ENCODE measurements at regions of chr4 and their contacts with region 1.

Region 1: GRCh38 chr4:109998867-109999584 is 86.3 kb downstream of the EGF start:
- DNase-seq: no peak
- H3K4me3 ChIP-seq: no peak overlapping the region
- H3K27ac ChIP-seq: no peak overlapping the region
- H3K4me1 ChIP-seq: peaks cover 5% of the 10 kb centered on the region
- H3K27me3 ChIP-seq: no peaks in the 10 kb centered on the region
- CTCF ChIP-seq: peak; percentile 27 to 56 (median 45)

Region 2: DNA sequence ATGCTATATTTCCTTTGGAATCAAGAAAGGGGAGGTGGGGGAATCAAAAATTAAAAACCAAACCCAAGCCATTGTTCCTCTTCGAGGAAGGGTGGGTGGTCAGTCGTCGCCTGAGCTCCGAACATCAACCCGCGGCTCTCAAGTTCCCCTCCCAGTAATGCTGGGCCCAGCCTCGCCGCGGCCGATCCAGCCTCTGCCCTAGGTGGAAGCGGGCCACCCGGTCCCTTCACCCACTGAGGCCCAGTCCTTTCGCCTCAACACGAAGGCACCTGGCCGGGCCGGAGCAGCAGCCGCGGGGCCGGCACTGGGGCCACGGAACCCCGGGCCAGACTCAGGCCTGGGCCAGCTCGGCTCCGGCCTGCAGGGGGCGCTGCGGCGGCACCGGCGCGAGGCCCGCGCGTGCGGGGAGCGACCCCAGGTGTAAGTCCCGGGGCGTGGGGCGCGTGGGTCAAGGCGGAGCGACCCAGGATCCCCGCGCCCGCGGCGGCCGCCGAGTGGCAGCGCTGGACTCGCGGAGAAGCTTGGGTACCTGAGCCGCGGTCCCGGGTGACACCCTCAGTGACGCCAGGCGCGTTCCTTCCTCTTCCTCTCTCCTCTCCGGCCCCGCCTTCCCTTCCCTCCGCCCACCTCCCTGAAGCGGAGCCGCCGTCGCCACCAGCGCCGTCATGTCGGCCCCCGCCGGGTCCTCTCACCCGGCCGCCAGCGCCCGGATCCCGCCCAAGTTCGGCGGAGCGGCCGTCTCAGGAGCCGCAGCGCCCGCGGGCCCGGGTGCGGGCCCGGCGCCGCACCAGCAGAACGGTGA is 565.6 kb before region 1 on chr4 and contains the start of gene SEC24B:
- dilution Hi-C with region 1: loop called (anchors 25 kb)
- DNase-seq: no peak
- H3K4me3 ChIP-seq: peak within 1 kb of the TSS; percentile 65 to 92 (median 74)
- H3K27ac ChIP-seq: peak within 1 kb of the TSS; percentile 87
- H3K4me1 ChIP-seq: peaks cover 28% of the 10 kb centered on the region
- H3K27me3 ChIP-seq: no peaks in the 10 kb centered on the region
- CTCF ChIP-seq: peak in 2 of 3 experiments; percentile 58 to 81
- polyA plus RNA-seq, gene SEC24B: 47.6 to 53.4 TPM (median 50.9 TPM) in 3 replicates